ENCODE measurements at regions of chr17 and their contacts with region 1.

Region 1: GRCh38 chr17:67475236-67475937 is 98.3 kb downstream of the PITPNC1 start:
- DNase-seq: peak; percentile 90
- H3K4me3 Mint-ChIP-seq: peak overlapping the region; percentile 68
- H3K27ac Mint-ChIP-seq: peak overlapping the region; percentile 95
- H3K4me1 Mint-ChIP-seq: peaks cover 72% of the 10 kb centered on the region
- H3K27me3 Mint-ChIP-seq: no peaks in the 10 kb centered on the region

Region 2: GRCh38 chr17:67390646-67391384 is 84.6 kb before region 1 on chr17:
- CTCF ChIA-PET with region 1: interaction called, 161 read pairs
- DNase-seq: peak; percentile 73
- H3K4me3 Mint-ChIP-seq: peak overlapping the region; percentile 47
- H3K27ac Mint-ChIP-seq: peak overlapping the region; percentile 87
- H3K4me1 Mint-ChIP-seq: peaks cover 66% of the 10 kb centered on the region
- H3K27me3 Mint-ChIP-seq: no peaks in the 10 kb centered on the region

Region 3: GRCh38 chr17:67431249-67432048 is 43.9 kb before region 1 on chr17:
- CTCF ChIA-PET with region 1: interaction called, 24 read pairs
- DNase-seq: no peak
- H3K4me3 Mint-ChIP-seq: no peak overlapping the region
- H3K27ac Mint-ChIP-seq: peak overlapping the region; percentile 51
- H3K4me1 Mint-ChIP-seq: peaks cover 72% of the 10 kb centered on the region
- H3K27me3 Mint-ChIP-seq: no peaks in the 10 kb centered on the region

Region 4: GRCh38 chr17:67441052-67441927 is 34.1 kb before region 1 on chr17:
- CTCF ChIA-PET with region 1: interaction called, 35 read pairs
- DNase-seq: peak; percentile 80
- H3K4me3 Mint-ChIP-seq: peak overlapping the region; percentile 77
- H3K27ac Mint-ChIP-seq: peak overlapping the region; percentile 100
- H3K4me1 Mint-ChIP-seq: peaks cover 82% of the 10 kb centered on the region
- H3K27me3 Mint-ChIP-seq: no peaks in the 10 kb centered on the region

Region 5: DNA sequence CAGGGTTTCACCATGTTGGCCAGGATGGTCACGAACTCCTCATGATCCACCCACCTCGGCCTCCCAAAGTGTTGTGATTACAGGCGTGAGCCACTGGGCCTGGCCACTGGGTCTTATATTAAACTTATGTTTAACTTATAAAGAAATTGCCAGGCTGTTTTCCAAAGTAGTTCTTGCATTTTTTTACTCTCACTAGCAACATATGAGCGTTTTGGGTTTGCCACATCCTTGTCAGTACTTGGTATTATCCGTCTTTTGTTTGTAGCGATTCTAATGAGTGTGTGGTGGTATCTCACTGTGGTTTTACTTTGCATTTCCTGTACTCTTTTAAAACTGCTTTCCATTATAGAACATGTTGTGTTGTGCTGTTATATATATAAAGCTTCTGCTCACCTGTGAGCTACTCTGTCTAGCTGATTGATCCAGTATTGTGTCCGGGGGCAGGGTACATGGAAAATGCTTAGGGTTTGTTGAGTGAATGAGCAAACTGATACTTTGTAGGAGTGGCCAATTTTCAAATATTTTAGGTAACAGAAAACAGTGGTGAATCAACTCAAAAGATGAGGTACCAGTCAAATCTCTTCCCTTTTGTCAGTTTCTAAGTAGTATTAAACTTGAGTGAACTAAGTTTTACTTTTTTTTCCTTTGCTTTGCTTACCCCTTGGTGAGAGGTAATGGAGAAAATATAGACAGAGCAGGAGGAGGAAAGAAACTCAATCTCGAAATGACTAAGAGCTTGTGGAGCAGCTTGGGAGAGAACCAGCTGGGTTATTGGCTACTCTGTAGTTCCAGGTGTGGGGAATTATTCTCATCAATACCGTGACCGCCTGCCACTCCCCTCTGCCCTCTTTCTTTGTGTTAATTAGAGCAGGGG is 22.5 kb before region 1 on chr17:
- CTCF ChIA-PET with region 1: interaction called, 20 read pairs
- DNase-seq: peak; percentile 64
- H3K4me3 Mint-ChIP-seq: peak overlapping the region; percentile 59
- H3K27ac Mint-ChIP-seq: peak overlapping the region; percentile 100
- H3K4me1 Mint-ChIP-seq: peaks cover 92% of the 10 kb centered on the region
- H3K27me3 Mint-ChIP-seq: no peaks in the 10 kb centered on the region

Region 6: DNA sequence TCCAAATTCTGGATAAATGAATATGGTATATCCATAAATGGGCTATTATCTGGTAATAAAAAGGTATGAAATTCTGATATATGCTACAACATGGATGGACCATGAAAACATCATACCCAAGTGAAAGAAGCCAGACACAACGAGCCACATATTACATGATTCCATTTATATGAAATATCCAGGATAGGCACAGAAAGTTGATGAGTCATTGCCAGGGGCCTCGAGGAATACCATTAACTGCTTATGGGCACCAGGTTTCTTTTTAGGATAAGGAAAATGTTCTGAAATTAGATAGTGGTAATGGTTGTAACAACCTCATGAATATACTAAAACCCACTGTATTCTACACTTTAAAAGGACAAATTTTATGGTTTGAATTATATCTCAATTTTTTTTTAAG is 24.9 kb after region 1 on chr17:
- CTCF ChIA-PET with region 1: no interaction called
- DNase-seq: no peak
- H3K4me3 Mint-ChIP-seq: no peak overlapping the region
- H3K27ac Mint-ChIP-seq: no peak overlapping the region
- H3K4me1 Mint-ChIP-seq: peaks cover 25% of the 10 kb centered on the region
- H3K27me3 Mint-ChIP-seq: no peaks in the 10 kb centered on the region

Region 7: GRCh38 chr17:67620636-67621035 is 145.2 kb after region 1 on chr17:
- CTCF ChIA-PET with region 1: no interaction called
- DNase-seq: no peak
- H3K4me3 Mint-ChIP-seq: no peak overlapping the region
- H3K27ac Mint-ChIP-seq: no peak overlapping the region
- H3K4me1 Mint-ChIP-seq: no peaks in the 10 kb centered on the region
- H3K27me3 Mint-ChIP-seq: no peaks in the 10 kb centered on the region

Measured in activated naive CD4-positive, alpha-beta T cell treated with anti-CD3 and anti-CD28 coated beads, Interleukin-2, amount 10 ng/mL, durations not matched to agents 7 days and 5 days (primary cell).